Left cardiac atrium (tissue), 4 donors: ENCODE measurements at regions of chrX and their contacts with region 1.

Region 1: GRCh38 chrX:23694606-23695005 is 27.3 kb downstream of the PRDX4 start:
- DNase-seq: peak; percentile 57
- ATAC-seq: peak in 1 of 2 donors; percentile 56

Region 2: GRCh38 chrX:23901805-23902204 is 207.2 kb after region 1 on chrX:
- intact Hi-C with region 1: loop called in 1 of 2 experiments (anchors 2 kb)
- DNase-seq: peak; percentile 41
- ATAC-seq: peak; percentile 87 to 92

Region 3: DNA sequence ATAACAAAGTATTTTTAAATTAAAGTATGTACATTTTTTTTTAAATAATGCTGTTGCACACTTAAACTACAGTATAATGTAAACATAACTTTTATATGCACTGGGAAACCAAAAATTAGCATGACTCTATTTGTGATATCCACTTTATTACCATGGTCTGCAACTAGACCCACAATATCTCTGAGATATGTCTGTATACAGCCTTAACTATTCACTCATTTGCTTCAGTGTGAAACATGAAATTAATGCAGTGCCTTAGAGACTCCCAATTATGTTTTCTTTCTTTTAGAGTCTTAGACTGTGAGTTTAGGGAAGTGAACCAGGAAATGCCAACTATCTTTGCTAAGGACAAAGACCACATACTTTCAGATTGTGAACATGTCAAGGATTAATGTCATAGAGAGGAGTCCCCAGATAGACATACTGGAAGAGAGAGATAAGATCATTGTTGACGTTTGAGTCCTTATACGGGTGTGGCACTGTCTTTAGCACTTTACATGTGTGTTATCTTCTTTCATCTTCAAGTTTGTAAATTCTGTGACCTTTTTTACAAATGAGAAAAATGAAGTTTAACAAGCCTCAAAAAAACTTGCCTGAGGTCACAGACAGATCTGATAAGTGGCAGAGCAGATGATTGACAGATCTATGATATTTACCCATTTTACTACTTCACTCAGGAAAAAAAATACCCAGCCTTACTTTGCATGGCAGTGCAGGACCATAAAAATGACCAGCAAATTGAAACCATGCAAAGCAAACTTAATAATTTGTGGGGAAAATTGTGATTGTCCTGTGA is 236.5 kb after region 1 on chrX:
- intact Hi-C with region 1: no loop called
- DNase-seq: no peak
- ATAC-seq: no peak

Region 4: GRCh38 chrX:24100713-24101112 is 406.1 kb after region 1 on chrX:
- intact Hi-C with region 1: no loop called
- DNase-seq: no peak
- ATAC-seq: no peak